Activated naive CD4-positive, alpha-beta T cell treated with anti-CD3 and anti-CD28 coated beads for 36 hours (primary cell): ENCODE measurements at regions of chr20 and their contacts with region 1.

Region 1: DNA sequence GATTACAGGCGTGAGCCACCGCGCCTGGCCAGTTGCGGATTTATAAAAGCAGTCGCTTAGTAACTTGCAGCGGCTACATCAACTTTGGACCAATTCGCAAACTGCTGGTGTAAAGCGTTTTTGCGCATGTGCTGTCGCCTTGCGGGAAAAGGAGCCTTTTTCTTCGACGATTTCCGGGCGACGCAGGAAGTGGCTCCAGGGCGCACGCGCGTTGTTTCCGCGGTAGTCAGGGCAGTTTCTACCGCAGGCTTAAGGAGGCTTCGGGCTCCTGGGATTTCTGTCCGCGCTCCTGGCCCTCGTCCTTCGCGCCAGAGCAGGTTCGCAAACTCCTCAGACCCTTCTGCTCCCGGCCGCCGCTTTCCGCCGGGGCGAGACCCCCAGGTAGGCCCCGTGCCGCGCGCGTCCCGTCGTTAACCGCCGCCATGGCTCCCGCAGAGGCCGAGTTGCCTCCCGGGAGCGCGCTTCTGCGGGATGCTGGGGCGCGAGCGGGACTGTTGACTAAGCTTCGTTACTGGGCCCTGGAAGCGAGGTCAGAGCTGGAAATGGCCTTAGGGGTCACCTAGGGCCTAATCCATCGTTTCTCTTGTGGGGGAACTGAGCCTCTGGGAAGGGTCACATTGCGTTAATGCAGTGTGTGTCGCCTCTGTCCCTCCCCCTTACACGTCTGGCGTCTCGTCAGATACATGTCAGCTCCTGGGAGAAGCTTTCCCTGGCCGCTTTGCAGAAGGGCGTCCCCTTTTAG is at the start of gene RAE1:
- DNase-seq: peak; percentile 94
- H3K4me3 Mint-ChIP-seq: peak within 1 kb of the TSS; percentile 81
- H3K27ac Mint-ChIP-seq: peak within 1 kb of the TSS; percentile 83
- H3K4me1 Mint-ChIP-seq: peaks cover 22% of the 10 kb centered on the region
- H3K27me3 Mint-ChIP-seq: no peaks in the 10 kb centered on the region
- total RNA-seq, gene RAE1: 45.6 to 46.5 TPM

Region 2: GRCh38 chr20:56934888-56935287 is 416.3 kb before region 1 on chr20:
- CTCF ChIA-PET with region 1: no interaction called
- intact Hi-C with region 1: no loop called
- DNase-seq: no peak
- H3K4me3 Mint-ChIP-seq: no peak overlapping the region
- H3K27ac Mint-ChIP-seq: no peak overlapping the region
- H3K4me1 Mint-ChIP-seq: no peaks in the 10 kb centered on the region
- H3K27me3 Mint-ChIP-seq: peaks cover 14% of the 10 kb centered on the region

Region 3: DNA sequence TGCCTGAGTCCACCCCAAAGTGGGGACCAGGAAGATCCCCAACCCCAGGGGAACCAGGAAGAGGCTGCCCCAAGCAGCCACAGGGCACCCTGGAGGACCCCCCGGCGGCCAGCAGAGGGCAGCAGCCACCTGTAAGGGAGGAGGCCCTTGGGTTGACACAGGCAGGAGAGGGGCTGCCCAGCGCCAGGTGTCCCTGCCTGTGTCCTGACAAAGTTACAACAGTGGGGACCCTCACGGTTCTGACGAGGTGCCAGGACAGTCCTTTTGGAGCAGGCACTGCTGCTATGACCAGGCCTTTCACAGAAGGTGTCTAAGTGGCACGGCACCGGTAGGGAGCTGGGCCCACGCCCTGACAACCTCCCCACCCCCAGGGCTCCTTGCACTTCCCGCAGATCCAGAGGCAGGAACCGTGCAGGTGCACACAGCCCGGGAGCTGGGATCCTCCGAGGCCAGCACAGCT is 261.5 kb before region 1 on chr20:
- CTCF ChIA-PET with region 1: interaction called, 16 read pairs
- intact Hi-C with region 1: loop called (anchors 1 kb)
- DNase-seq: peak; percentile 82
- H3K4me3 Mint-ChIP-seq: no peak overlapping the region
- H3K27ac Mint-ChIP-seq: no peak overlapping the region
- H3K4me1 Mint-ChIP-seq: peaks cover 11% of the 10 kb centered on the region
- H3K27me3 Mint-ChIP-seq: peaks cover 9% of the 10 kb centered on the region

Region 4: GRCh38 chr20:57266291-57267157 is 84.7 kb before region 1 on chr20 and contains the start of gene BMP7:
- CTCF ChIA-PET with region 1: no interaction called
- intact Hi-C with region 1: no loop called
- DNase-seq: no peak
- H3K4me3 Mint-ChIP-seq: no peak within 1 kb of the TSS
- H3K27ac Mint-ChIP-seq: no peak within 1 kb of the TSS
- H3K4me1 Mint-ChIP-seq: peaks cover 5% of the 10 kb centered on the region
- H3K27me3 Mint-ChIP-seq: peaks cover 64% of the 10 kb centered on the region
- total RNA-seq, gene BMP7: not detected

Region 5: GRCh38 chr20:57308813-57309271 is 42.4 kb before region 1 on chr20:
- CTCF ChIA-PET with region 1: no interaction called
- intact Hi-C with region 1: no loop called
- DNase-seq: no peak
- H3K4me3 Mint-ChIP-seq: no peak overlapping the region
- H3K27ac Mint-ChIP-seq: no peak overlapping the region
- H3K4me1 Mint-ChIP-seq: no peaks in the 10 kb centered on the region
- H3K27me3 Mint-ChIP-seq: no peaks in the 10 kb centered on the region

Region 6: DNA sequence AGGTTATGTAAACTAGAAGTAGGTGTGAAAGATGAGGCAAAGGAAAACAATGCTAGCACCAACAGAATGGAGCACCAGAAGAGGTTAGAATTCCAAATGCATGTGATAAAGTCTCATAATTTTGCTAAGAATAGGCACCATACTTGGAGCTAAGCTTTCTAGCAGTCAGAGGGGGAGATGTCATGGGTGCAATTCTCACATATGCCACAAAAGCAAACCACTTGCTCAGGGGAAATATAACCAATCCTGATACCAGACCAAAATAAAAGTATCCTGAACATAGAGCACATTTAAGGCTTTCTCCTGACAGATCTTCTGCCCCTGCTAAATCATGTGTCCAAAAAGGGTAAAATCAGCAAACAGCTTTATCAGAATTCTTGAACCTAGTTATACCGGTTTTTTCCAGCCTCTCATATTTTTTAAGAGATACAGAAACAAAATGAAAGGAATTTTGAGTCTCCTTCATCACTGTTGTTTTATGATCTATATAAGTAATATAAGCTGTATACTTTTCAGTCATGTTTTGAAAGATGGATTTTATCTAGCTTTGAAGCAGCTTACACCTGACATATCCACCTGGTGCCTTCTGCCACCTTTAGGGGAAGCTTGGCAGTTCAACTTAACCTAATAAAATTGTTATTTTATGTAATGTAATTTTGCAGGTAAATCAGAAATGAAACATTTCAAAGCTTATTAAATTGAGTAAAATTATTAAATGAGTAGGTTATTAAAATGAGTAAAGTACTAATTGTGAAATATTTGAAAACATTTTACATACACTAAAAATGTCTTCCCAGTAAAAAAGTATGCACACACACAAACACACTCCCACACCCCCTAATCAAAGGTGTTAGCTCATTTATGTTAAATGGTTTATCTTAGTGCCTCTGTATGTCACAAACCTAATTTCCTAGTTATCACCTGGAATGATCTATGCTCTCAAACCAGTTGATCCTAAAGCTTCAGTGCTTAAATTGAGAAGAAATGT is 18.8 kb before region 1 on chr20:
- CTCF ChIA-PET with region 1: interaction called, 18 read pairs
- intact Hi-C with region 1: no loop called
- DNase-seq: no peak
- H3K4me3 Mint-ChIP-seq: no peak overlapping the region
- H3K27ac Mint-ChIP-seq: no peak overlapping the region
- H3K4me1 Mint-ChIP-seq: no peaks in the 10 kb centered on the region
- H3K27me3 Mint-ChIP-seq: peaks cover 22% of the 10 kb centered on the region

Region 7: DNA sequence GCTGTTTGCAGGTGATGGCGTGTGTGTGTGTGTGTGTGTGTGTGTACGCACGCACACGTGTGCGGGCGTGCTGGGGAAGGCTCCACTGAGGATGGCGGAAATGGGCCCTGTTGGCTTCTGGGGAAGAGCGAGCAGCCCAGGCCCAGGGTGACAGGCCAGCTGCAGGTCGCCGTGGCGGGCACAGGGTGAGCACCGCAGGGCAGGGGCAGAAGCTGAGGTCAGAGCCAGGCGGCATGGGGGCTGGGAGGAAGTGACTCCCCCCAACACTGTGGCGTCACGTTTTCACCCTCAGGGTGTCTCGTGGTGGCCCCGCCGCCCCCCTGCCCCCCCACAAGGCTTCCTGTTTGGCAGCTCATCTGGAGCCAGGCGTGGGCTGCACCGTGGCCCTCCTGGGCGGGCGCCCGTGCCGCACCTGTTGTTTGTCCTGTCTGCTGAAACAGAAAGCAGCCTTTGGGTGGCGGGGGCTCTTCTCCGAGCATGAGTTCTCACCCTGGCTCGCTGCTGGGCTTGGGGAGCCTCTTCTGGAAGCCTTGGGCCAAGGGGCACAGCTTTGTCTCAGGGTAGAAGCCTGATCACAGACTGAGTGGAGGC is 47.1 kb after region 1 on chr20:
- CTCF ChIA-PET with region 1: interaction called, 3 read pairs
- intact Hi-C with region 1: loop called (anchors 2 kb)
- DNase-seq: peak; percentile 91
- H3K4me3 Mint-ChIP-seq: peak overlapping the region; percentile 80
- H3K27ac Mint-ChIP-seq: peak overlapping the region; percentile 99
- H3K4me1 Mint-ChIP-seq: peaks cover 93% of the 10 kb centered on the region
- H3K27me3 Mint-ChIP-seq: no peaks in the 10 kb centered on the region

Region 8: DNA sequence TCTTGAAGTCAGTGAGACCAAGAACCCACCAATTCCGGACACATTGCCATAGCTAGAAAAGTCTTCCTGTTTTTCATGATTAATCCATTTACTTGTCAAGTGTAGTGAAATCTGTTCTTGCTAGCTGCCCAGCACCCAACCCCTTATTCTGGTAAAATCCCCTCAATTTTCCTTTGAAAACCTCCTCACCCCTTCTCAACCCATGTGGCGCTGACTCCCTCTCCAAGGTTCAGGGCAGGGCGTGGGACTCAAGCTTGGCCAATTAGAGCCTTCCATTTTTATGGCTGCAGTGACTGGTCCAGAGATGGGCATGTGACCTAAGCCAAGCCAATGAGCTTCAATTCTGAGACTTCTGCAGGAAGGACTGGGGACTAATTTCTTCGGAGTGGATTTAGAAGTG is 278.8 kb after region 1 on chr20:
- CTCF ChIA-PET with region 1: no interaction called
- intact Hi-C with region 1: no loop called
- DNase-seq: peak; percentile 79
- H3K4me3 Mint-ChIP-seq: peak overlapping the region; percentile 94
- H3K27ac Mint-ChIP-seq: peak overlapping the region; percentile 95
- H3K4me1 Mint-ChIP-seq: peaks cover 60% of the 10 kb centered on the region
- H3K27me3 Mint-ChIP-seq: no peaks in the 10 kb centered on the region